H1 (cell line): ENCODE measurements at regions of chr19 and their contacts with region 1.

Region 1: DNA sequence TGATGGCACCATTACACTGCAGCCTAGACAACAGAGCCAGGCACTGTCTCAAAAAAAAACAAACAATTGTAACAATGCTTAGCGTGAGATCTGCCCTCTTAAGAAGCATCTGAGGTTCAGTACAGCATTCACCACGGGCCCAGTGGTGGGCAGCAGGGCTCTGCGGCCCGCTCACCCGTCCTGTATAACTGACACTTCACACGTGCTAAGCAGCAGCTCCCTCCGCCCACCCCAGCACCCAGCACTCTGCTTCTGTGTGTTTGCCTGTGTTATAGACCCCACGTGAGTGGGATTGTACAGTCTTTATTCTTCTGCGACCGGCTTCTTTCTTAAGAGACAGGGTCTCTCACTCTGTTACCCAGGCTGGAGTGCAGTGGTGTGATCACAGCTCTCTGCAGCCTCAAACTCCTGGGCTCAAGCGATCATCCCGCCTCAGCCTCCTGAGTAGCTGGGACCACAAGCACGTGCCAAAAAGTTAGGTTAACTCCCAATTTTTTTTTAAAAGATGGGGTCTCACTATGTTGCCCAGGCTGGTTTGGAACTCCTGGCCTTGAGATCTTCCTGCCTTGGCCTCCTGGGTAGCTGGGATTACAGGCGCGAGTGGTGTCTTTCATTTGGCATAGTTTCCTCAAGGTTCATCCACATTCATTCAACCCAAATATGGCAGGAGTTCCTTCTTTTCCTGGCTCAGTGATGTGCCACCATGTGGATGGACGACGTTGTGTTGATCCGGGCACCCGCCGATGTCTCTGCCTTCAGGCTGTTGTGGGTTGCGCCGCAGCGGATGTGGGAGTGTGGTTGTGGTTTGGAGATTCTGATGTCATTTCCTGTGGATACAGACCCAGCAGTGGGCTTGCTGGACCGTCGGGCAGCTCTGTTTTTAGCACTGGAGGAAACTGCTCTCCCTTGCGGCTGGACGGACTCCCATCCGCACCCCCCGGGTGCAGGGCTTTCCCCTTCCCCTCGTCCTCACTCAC is 170.0 kb downstream of the KDM4B start:
- DNase-seq: no peak
- H3K4me3 ChIP-seq: no peak overlapping the region
- H3K27ac ChIP-seq: no peak overlapping the region
- H3K4me1 ChIP-seq: peaks cover 0 to 5% (median 0%) of the 10 kb centered on the region in 4 experiments; a peak in 2 of 7 replicates
- H3K27me3 ChIP-seq: no peaks in the 10 kb centered on the region
- CTCF ChIP-seq: no peak
- EP300 ChIP-seq: no peak
- POLR2A ChIP-seq: no peak
- RAD21 ChIP-seq: no peak

Region 2: DNA sequence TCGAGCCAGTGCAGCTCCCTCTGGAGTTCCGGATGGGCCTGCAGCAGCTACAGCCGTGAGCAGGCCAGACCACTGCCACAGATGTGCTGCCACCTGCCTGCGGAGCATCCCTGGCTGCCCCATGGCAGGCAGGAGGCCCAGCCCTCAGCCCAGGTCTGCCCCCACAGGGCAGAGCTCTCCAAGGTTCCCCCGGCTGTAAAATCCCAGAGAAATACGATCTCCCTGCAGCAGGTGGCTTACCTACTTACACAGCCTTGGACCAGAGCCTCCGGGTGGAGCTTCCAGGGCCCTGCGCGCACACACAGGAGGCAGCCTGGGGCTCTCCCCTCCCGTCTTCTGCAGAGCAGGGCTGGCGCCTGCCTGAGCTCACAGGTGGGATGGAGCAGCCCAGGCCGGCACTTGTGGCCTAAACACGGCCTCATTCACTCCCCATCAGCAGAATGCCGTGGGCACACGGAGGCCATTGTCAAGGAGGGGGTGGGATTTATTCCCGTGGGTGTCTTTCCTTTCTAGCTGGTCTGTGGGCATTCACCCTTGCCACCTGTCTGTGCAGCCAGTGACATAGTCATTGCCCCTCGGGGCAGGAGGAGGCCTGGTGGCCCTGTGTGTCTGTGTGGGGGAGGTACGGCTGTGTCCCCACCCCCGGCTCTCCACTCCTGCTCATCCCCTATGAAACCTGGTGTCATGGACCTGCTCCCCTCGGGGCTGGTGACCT is 52.0 kb before region 1 on chr19:
- CTCF ChIA-PET with region 1: interaction called, 11 read pairs
- POLR2A ChIA-PET with region 1: no interaction called
- DNase-seq: peak; percentile 76 to 79
- H3K4me3 ChIP-seq: no peak overlapping the region
- H3K27ac ChIP-seq: no peak overlapping the region
- H3K4me1 ChIP-seq: peaks cover 0 to 6% (median 4%) of the 10 kb centered on the region in 4 experiments; a peak in 4 of 7 replicates
- H3K27me3 ChIP-seq: no peaks in the 10 kb centered on the region
- CTCF ChIP-seq: peak; percentile 75 to 97 (median 89)
- EP300 ChIP-seq: no peak
- POLR2A ChIP-seq: no peak
- RAD21 ChIP-seq: peak; percentile 45 to 68

Region 3: GRCh38 chr19:5112681-5113557 is 26.0 kb before region 1 on chr19:
- CTCF ChIA-PET with region 1: interaction called, 23 read pairs
- POLR2A ChIA-PET with region 1: no interaction called
- DNase-seq: no peak
- H3K4me3 ChIP-seq: no peak overlapping the region
- H3K27ac ChIP-seq: no peak overlapping the region; the same call in 1 of the 2 replicates
- H3K4me1 ChIP-seq: peaks cover 0 to 40% (median 26%) of the 10 kb centered on the region in 4 experiments; a peak in 6 of 7 replicates
- H3K27me3 ChIP-seq: no peaks in the 10 kb centered on the region
- CTCF ChIP-seq: no peak
- EP300 ChIP-seq: no peak
- POLR2A ChIP-seq: no peak
- RAD21 ChIP-seq: no peak